ENCODE measurements at regions of chr1 and their contacts with region 1.

Region 1: DNA sequence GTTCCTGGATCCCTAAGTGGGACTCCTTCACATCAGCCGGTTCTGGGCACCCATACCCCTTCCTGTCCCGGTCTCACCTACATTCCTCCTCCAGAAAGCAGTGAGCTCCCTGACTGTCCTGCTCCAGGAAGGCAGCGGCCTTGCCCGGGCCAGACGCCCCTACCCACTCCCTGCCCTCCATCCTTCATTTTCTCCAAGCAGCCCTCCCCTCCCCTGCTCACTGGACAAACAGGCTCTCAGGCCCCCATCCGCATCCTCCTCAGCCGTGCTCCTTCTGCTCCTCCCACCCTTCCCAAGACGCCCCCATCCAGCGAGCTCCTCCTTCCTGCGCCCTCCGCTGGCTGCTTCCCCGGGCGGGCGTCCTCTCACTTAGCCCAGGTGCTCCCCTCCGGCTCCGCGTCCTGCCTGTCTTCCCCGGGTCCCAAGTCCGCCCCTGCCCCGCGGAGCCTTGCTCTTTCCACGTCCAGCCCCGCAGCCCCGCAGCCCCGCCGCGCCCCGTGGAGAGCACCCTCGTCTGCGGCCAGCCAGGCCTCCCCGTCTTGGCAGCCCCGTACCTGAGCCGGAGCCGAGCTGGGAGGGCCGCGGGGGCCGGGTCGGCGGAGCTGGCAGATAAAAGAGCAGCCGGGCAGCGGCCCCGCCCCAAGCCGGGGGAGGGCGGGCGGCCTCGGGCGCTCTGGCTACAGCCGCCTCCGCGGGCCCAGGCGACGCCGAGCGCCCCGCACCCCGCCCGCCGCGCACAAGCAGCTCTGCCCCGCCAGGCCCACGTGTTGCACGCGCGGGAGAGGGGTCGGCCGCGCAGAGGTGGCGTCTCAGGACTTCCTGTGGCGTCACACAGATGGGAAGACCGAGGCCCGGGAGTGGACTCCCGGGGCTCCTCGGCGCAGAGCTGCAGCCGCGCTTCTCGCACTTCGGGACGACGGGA is at the start of gene PAQR7:
- DNase-seq: peak in 1 of 2 experiments; percentile 86
- H3K4me3 ChIP-seq: peak within 1 kb of the TSS; percentile 26 to 69 (median 48)
- H3K27ac ChIP-seq: 0 out of 2 replicates have a peak within 1 kb of the TSS, but pooled peaks have one; percentile 8
- H3K4me1 ChIP-seq: peaks cover 0 to 13% (median 11%) of the 10 kb centered on the region in 4 experiments; a peak in 5 of 7 replicates
- H3K27me3 ChIP-seq: peaks cover 0 to 3% (median 1%) of the 10 kb centered on the region in 4 experiments; a peak in 4 of 7 replicates
- CTCF ChIP-seq: peak in 1 of 3 experiments; percentile 4; a peak in 1 of 4 replicates
- EP300 ChIP-seq: no peak
- POLR2A ChIP-seq: peak in 1 of 2 experiments; percentile 48; a peak in 1 of 3 replicates
- RAD21 ChIP-seq: no peak
- total RNA-seq, gene PAQR7: 7.3 and 7.7 TPM in 2 replicates

Region 2: DNA sequence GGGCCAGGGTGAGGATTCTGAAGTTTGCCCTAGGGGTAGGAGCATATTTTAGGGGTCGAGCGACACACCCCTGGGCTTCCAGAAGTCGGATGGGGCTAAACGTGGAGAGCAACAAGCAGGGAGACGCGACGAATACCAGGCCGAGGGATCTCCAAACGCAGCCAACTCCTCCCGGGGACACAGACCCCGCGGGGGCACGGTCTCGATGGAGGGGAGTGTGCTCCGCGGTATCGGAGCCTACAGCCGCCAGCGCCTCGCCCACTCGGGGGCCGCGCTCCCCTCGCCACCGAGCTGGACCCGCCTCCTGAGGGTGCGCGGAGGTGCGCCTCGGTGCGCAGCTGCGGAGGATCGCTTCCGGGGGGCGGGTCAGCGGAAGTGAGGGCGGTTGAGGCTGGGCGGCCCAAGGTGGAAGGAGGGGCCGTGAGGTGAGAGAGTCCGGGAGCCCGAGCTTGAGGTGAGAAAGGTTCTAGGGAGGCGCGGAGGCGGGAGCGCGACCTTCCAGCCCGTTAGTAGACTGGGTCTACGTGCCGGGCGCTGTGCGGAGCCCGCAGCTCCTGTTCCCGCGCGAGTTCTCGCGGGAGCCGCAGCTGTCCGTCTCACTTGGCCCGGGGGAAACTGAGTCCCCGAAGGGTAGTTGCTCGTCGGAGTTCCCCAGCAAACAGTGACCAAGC is 55.5 kb before region 1 on chr1 and contains the start of gene MTFR1L:
- CTCF ChIA-PET with region 1: interaction called, 3 read pairs
- POLR2A ChIA-PET with region 1: interaction called, 10 read pairs
- DNase-seq: peak in 1 of 2 experiments; percentile 91
- H3K4me3 ChIP-seq: peak within 1 kb of the TSS; percentile 75 to 85 (median 80)
- H3K27ac ChIP-seq: peak within 1 kb of the TSS; percentile 31; the same call in 1 of the 2 replicates
- H3K4me1 ChIP-seq: peaks cover 12 to 25% (median 15%) of the 10 kb centered on the region in 4 experiments
- H3K27me3 ChIP-seq: peaks cover 0 to 6% (median 2%) of the 10 kb centered on the region in 4 experiments; a peak in 4 of 7 replicates
- CTCF ChIP-seq: no peak
- EP300 ChIP-seq: no peak
- POLR2A ChIP-seq: peak; percentile 36 to 81
- RAD21 ChIP-seq: no peak
- total RNA-seq, gene MTFR1L: 20.8 and 23.1 TPM in 2 replicates

Region 3: DNA sequence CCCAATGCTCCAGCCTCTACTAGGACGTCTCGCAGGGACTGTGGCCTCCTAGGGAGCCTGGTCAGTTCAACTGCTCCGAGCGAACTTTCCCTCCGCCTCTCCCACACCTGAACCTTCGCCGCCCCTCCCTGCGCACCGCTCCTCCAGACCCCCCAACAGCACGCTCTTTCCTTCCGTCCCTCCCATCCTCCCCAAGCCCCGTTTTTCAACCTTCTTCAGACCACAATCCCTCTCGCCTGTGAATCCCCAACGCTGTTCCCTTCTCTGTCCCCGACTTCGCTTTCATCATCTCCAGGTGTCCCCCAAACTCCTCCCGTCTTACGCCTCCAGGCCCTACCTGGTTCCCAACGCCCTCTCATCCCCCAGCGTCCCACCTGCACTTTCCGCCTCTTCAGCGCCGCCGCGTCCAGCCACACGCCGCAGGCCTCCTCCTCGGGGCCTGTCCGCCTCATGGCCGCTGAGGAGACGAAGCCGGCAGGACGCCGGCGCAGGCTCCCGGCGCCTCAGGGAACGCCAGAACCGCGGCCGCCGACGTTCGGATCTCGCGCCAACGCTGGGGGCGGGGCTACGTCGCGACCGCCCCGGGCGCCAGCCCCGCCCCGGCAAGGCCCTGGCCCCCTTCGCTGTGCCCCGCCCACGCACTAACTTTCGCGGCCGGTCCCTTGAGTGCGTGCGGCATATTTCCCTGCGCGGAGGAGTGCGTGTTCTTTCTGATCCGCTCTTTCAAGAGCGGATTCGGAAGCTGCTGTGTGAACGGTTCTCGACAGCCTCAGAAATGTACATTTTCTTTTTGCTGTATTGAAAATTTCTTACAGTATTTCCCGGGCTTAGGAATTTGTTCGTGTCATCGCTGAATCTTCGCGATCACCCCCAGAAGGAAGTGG is 16.0 kb before region 1 on chr1 and contains the start of gene AUNIP:
- CTCF ChIA-PET with region 1: interaction called, 3 read pairs
- POLR2A ChIA-PET with region 1: interaction called, 21 read pairs
- DNase-seq: peak in 1 of 2 experiments; percentile 84
- H3K4me3 ChIP-seq: peak within 1 kb of the TSS; percentile 76 to 94 (median 86)
- H3K27ac ChIP-seq: peak within 1 kb of the TSS; percentile 89
- H3K4me1 ChIP-seq: no peaks in the 10 kb centered on the region; a peak in 2 of 7 replicates
- H3K27me3 ChIP-seq: no peaks in the 10 kb centered on the region
- CTCF ChIP-seq: no peak
- EP300 ChIP-seq: no peak
- POLR2A ChIP-seq: peak; percentile 88 to 94
- RAD21 ChIP-seq: no peak
- total RNA-seq, gene AUNIP: 22.9 and 23.2 TPM in 2 replicates

Region 4: GRCh38 chr1:25890239-25891034 is 15.2 kb after region 1 on chr1:
- CTCF ChIA-PET with region 1: interaction called, 25 read pairs
- POLR2A ChIA-PET with region 1: interaction called, 29 read pairs
- DNase-seq: no peak
- H3K4me3 ChIP-seq: no peak overlapping the region
- H3K27ac ChIP-seq: no peak overlapping the region
- H3K4me1 ChIP-seq: peaks cover 0 to 18% (median 10%) of the 10 kb centered on the region in 4 experiments; a peak in 6 of 7 replicates
- H3K27me3 ChIP-seq: no peaks in the 10 kb centered on the region
- CTCF ChIP-seq: no peak
- EP300 ChIP-seq: no peak
- POLR2A ChIP-seq: no peak
- RAD21 ChIP-seq: no peak

Region 5: GRCh38 chr1:25904943-25905679 is 29.9 kb after region 1 on chr1:
- CTCF ChIA-PET with region 1: interaction called, 8 read pairs
- POLR2A ChIA-PET with region 1: interaction called, 12 read pairs
- DNase-seq: peak; percentile 73 to 94
- H3K4me3 ChIP-seq: peak overlapping the region; percentile 76 to 100 (median 93)
- H3K27ac ChIP-seq: peak overlapping the region; percentile 24; the same call in 1 of the 2 replicates
- H3K4me1 ChIP-seq: peaks cover 5 to 11% (median 8%) of the 10 kb centered on the region in 4 experiments; a peak in 6 of 7 replicates
- H3K27me3 ChIP-seq: no peaks in the 10 kb centered on the region
- CTCF ChIP-seq: 0 out of 4 replicates have a peak, but pooled peaks of 1 of the 3 experiments have one; percentile 2
- EP300 ChIP-seq: no peak
- POLR2A ChIP-seq: no peak
- RAD21 ChIP-seq: no peak

Region 6: GRCh38 chr1:25958465-25958864 is 83.3 kb after region 1 on chr1:
- CTCF ChIA-PET with region 1: no interaction called
- POLR2A ChIA-PET with region 1: no interaction called
- DNase-seq: no peak
- H3K4me3 ChIP-seq: no peak overlapping the region
- H3K27ac ChIP-seq: no peak overlapping the region
- H3K4me1 ChIP-seq: peaks cover 0 to 5% (median 3%) of the 10 kb centered on the region in 4 experiments; a peak in 2 of 7 replicates
- H3K27me3 ChIP-seq: no peaks in the 10 kb centered on the region
- CTCF ChIP-seq: no peak
- EP300 ChIP-seq: no peak
- POLR2A ChIP-seq: no peak
- RAD21 ChIP-seq: no peak